ENCODE measurements at regions of chr3 and their contacts with region 1.

Region 1: GRCh38 chr3:130892759-130893375 is 1.0 kb upstream of the ATP2C1 start:
- DNase-seq: peak; percentile 87
- H3K4me3 Mint-ChIP-seq: peak overlapping the region; percentile 93
- H3K27ac Mint-ChIP-seq: peak overlapping the region; percentile 98
- H3K4me1 Mint-ChIP-seq: peaks cover 28% of the 10 kb centered on the region
- H3K27me3 Mint-ChIP-seq: no peaks in the 10 kb centered on the region
- CTCF ChIP-seq: peak; percentile 92

Region 2: DNA sequence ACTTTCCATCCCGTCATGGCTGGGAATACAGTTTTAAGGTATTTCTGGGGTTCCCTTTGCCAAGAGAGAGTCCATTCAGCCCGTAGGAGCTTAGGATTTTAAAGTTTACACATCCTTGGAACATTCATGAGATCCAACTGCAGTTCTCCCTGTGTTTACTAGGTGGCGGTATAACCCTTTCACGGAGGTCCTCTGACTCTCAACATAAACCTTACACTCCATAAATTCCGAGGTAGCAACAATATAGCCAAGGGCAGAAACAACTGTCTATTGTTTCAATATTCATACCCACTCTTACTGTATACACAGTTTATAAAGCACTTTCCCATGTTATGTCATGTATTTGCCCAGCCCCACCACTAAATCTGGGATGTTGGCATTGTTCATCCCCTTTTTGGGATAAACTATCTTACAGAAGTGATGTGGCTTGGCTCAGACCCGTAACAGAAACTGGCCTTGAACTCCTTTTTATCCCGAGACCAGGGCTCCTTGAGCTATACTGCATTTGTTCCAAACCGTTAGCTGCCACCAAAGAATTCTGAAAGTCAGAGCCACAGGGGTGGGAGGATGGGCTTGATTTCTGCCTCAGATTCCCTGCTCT is 616.6 kb before region 1 on chr3:
- CTCF ChIA-PET with region 1: no interaction called
- intact Hi-C with region 1: loop called (anchors 5 kb)
- DNase-seq: peak; percentile 50
- H3K4me3 Mint-ChIP-seq: no peak overlapping the region
- H3K27ac Mint-ChIP-seq: no peak overlapping the region
- H3K4me1 Mint-ChIP-seq: no peaks in the 10 kb centered on the region
- H3K27me3 Mint-ChIP-seq: peaks cover 54% of the 10 kb centered on the region
- CTCF ChIP-seq: peak; percentile 88

Region 3: GRCh38 chr3:130759699-130760338 is 133.0 kb before region 1 on chr3:
- CTCF ChIA-PET with region 1: interaction called, 44 read pairs
- intact Hi-C with region 1: loop called (anchors 1 kb)
- DNase-seq: peak; percentile 85
- H3K4me3 Mint-ChIP-seq: no peak overlapping the region
- H3K27ac Mint-ChIP-seq: no peak overlapping the region
- H3K4me1 Mint-ChIP-seq: peaks cover 29% of the 10 kb centered on the region
- H3K27me3 Mint-ChIP-seq: no peaks in the 10 kb centered on the region
- CTCF ChIP-seq: peak; percentile 93

Region 4: GRCh38 chr3:130820976-130821375 is 71.9 kb before region 1 on chr3:
- CTCF ChIA-PET with region 1: no interaction called
- intact Hi-C with region 1: loop called (anchors 1 kb)
- DNase-seq: peak; percentile 89
- H3K4me3 Mint-ChIP-seq: peak overlapping the region; percentile 37
- H3K27ac Mint-ChIP-seq: peak overlapping the region; percentile 98
- H3K4me1 Mint-ChIP-seq: peaks cover 73% of the 10 kb centered on the region
- H3K27me3 Mint-ChIP-seq: no peaks in the 10 kb centered on the region
- CTCF ChIP-seq: no peak

Region 5: GRCh38 chr3:130841357-130841756 is 51.5 kb before region 1 on chr3:
- CTCF ChIA-PET with region 1: no interaction called
- intact Hi-C with region 1: no loop called
- DNase-seq: no peak
- H3K4me3 Mint-ChIP-seq: no peak overlapping the region
- H3K27ac Mint-ChIP-seq: no peak overlapping the region
- H3K4me1 Mint-ChIP-seq: peaks cover 13% of the 10 kb centered on the region
- H3K27me3 Mint-ChIP-seq: no peaks in the 10 kb centered on the region
- CTCF ChIP-seq: no peak

Region 6: DNA sequence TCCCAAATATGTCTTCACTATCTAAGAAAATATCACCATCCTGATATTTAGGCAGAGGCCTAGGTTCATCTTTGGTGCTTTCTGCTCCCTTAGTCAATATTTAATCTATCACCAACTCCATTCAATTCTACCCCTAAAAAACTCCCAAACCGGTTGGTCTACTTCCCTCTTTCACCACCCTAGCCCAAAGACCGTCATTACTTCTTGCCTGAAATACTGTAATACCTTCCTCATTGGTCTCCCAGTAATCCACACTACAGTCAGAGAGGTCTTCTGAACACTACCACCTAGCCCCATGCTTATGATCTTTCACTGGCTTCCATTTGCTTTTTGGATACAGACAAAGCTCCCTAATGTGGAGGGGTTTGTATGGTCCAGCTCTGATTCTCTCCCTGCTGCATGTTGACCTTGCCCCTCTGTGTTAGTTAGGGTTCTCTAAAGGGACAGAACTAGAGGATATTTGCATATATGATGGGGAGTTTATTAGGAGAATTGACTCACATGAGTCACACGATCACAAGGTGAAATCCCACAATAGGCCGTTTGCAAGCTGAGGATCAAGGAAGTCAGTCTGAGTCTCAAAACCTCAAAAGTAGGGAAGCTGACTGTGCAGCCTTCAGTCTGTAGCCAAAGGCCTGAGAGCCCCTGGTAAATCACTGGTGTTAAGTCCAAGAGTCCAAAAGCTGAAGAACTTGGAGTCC is 35.4 kb before region 1 on chr3:
- CTCF ChIA-PET with region 1: interaction called, 10 read pairs
- intact Hi-C with region 1: no loop called
- DNase-seq: peak; percentile 67
- H3K4me3 Mint-ChIP-seq: peak overlapping the region; percentile 51
- H3K27ac Mint-ChIP-seq: peak overlapping the region; percentile 78
- H3K4me1 Mint-ChIP-seq: peaks cover 75% of the 10 kb centered on the region
- H3K27me3 Mint-ChIP-seq: no peaks in the 10 kb centered on the region
- CTCF ChIP-seq: no peak

Region 7: DNA sequence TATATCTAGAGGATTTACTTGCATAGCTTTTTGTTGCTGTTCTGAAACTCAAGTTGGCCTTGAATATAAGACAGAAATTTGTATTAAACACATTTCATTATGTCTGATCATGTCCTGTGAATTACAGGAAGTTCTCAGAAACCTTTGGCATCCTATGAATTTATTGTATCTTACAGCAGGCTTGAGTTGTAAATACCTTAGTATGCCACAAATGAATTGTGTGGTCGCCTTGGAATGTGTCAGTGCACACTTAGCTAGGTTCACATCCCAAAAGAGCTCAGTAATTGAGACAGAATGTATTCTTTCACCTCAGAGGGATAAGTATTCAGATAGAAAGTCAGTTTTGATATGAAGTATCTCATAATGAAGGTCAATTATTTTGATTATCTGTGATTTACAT is 217.2 kb after region 1 on chr3:
- CTCF ChIA-PET with region 1: no interaction called
- intact Hi-C with region 1: no loop called
- DNase-seq: no peak
- H3K4me3 Mint-ChIP-seq: no peak overlapping the region
- H3K27ac Mint-ChIP-seq: no peak overlapping the region
- H3K4me1 Mint-ChIP-seq: peaks cover 21% of the 10 kb centered on the region
- H3K27me3 Mint-ChIP-seq: no peaks in the 10 kb centered on the region
- CTCF ChIP-seq: no peak

Region 8: DNA sequence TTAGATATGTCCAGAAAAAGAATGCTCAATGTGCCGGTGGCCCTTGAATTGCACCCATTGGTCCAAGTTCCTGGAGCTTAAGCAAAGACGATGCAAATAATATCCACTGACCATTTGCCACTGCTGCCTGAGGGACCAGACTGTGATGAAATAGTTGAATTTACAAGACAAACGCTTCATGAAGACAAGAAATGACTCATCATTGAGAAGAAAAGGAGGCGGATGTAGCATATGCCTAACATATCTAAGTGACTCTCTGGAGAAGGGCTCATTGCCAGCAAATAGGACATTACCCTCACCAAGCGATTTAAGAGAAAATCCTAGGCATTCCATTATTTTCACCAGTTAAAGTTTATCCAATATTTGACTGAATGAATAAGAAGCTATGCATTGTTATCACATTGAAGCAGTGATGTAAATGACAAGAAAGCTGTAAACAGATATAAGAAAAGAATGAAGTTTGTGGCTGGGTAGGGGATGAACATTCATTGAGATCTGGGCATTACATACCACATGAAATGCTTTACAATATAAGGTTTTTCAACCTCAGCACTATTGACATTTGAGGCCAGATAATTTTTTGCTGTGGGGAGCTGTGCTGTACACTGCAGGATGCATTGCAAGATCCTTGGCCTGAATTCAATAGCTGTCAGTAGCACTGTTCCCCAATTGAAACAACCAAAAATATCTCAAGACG is 1190.9 kb after region 1 on chr3:
- CTCF ChIA-PET with region 1: no interaction called
- intact Hi-C with region 1: no loop called
- DNase-seq: peak; percentile 54
- H3K4me3 Mint-ChIP-seq: peak overlapping the region; percentile 31
- H3K27ac Mint-ChIP-seq: peak overlapping the region; percentile 0
- H3K4me1 Mint-ChIP-seq: peaks cover 49% of the 10 kb centered on the region
- H3K27me3 Mint-ChIP-seq: no peaks in the 10 kb centered on the region
- CTCF ChIP-seq: no peak